PC-9 (cell line): ENCODE measurements at regions of chr9 and their contacts with region 1.

Region 1: DNA sequence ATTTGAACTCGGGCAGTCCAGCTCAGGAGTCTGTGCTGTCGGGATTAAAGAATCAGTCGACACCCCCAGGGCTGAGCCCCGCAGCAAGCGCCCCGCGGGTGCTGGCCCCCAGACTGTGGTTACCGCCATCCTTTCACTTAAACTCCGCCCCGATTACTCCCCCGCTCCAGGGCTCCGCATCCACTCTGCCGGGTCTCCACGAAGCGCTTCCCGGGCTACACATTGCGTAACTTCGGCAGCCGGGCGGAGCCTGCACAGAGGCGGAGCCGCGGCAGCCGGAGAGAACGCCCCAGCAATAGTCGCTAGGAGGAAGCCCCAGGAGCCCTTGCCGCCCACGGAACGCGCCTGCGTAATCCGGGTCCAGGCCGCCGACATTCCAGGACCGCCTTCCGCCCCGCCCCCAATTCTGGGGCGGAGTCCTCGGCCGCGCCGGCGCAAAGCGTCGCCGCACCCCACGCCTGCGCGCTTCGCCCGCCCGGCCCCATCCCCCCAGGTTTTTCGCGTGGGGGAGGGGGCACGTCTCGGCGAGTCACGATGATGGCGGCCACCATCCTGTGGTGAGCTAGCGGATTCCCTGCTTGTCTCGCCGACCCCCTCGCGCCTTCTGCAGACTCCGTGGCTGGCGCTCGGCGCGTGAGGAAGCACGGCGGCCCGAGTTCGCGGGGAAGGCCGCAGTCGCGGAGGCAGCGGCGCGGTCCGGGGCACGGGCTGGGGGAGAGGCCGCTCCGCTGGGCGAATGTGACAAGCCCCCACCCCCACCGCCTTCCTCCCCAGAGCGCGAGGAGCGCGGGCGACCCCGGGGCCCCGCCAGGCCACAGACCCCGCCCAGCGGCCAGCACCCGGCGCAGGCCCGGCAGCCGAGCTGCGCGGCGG is at the start of gene RAD23B:
- DNase-seq: peak; percentile 94 to 99
- H3K4me3 ChIP-seq: peak within 1 kb of the TSS; percentile 77
- H3K27ac ChIP-seq: peak within 1 kb of the TSS; percentile 88
- H3K4me1 ChIP-seq: peaks cover 58% of the 10 kb centered on the region
- H3K27me3 ChIP-seq: no peaks in the 10 kb centered on the region
- CTCF ChIP-seq: no peak
- total RNA-seq, gene RAD23B: 164 and 176 TPM in 2 replicates

Region 2: GRCh38 chr9:107243751-107244150 is 39.2 kb before region 1 on chr9:
- CTCF ChIA-PET with region 1: interaction called, 5 read pairs
- POLR2A ChIA-PET with region 1: interaction called, 7 read pairs
- intact Hi-C with region 1: loop called (anchors 1 kb)
- DNase-seq: peak; percentile 76 to 99
- H3K4me3 ChIP-seq: peak overlapping the region; percentile 15; the same call in 1 of the 2 replicates
- H3K27ac ChIP-seq: peak overlapping the region; percentile 92
- H3K4me1 ChIP-seq: peaks cover 76% of the 10 kb centered on the region
- H3K27me3 ChIP-seq: no peaks in the 10 kb centered on the region
- CTCF ChIP-seq: no peak

Region 3: DNA sequence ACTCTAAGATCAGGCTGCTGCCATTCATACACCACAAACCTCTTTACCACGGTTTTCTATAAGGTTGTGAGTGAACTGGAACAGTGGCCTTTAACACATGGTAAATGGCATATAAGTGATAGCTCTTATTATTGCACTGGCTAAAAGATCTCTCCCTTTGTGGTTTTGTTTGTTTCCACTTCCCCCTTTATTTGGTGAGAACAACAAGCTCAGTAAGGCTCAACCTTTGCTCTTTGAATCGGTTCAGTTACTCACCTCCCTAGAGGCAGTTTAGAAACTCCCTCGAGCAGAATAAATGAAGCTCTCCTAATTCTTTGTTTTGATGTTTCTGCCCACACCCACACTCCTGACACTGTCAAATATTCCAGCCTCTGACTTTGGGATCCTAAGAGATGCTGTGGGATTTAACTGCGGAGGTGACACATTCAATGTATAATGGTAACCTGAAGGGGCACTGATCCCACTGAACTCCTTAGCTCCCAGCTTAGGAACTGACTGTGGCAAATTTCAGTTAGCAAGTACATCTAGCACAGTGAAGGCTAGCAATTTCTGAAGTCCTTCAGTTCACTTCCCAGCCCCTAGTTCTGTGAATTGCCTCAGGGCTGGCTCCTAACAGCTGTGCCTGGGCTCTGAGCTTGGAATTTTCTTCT is 22.4 kb before region 1 on chr9:
- CTCF ChIA-PET with region 1: no interaction called
- POLR2A ChIA-PET with region 1: no interaction called
- intact Hi-C with region 1: no loop called
- DNase-seq: peak in 1 of 2 experiments; percentile 86
- H3K4me3 ChIP-seq: no peak overlapping the region
- H3K27ac ChIP-seq: peak overlapping the region; percentile 64
- H3K4me1 ChIP-seq: peaks cover 25% of the 10 kb centered on the region
- H3K27me3 ChIP-seq: no peaks in the 10 kb centered on the region
- CTCF ChIP-seq: no peak

Region 4: GRCh38 chr9:107438211-107439090 is 155.5 kb after region 1 on chr9:
- CTCF ChIA-PET with region 1: no interaction called
- POLR2A ChIA-PET with region 1: no interaction called
- intact Hi-C with region 1: loop called (anchors 10 kb)
- DNase-seq: peak; percentile 33 to 90
- H3K4me3 ChIP-seq: peak overlapping the region; percentile 25; the same call in 1 of the 2 replicates
- H3K27ac ChIP-seq: peak overlapping the region; percentile 73
- H3K4me1 ChIP-seq: peaks cover 19% of the 10 kb centered on the region
- H3K27me3 ChIP-seq: no peaks in the 10 kb centered on the region
- CTCF ChIP-seq: no peak